Dorsolateral prefrontal cortex (tissue), 120 donors: ENCODE measurements at regions of chr9 and their contacts with region 1.

Region 1: GRCh38 chr9:116737152-116737546 is 50.0 kb downstream of the TRIM32 start:
- DNase-seq: peak; percentile 79 to 92 (median 88)
- H3K4me3 ChIP-seq: peak overlapping the region in 3 of 59 donors; percentile 18 to 38 (median 27)
- H3K27ac ChIP-seq: peak overlapping the region in 1 of 59 donors; percentile 6
- H3K27me3 ChIP-seq: no peaks in the 10 kb centered on the region
- CTCF ChIP-seq: peak; percentile 66 to 95 (median 88)

Region 2: DNA sequence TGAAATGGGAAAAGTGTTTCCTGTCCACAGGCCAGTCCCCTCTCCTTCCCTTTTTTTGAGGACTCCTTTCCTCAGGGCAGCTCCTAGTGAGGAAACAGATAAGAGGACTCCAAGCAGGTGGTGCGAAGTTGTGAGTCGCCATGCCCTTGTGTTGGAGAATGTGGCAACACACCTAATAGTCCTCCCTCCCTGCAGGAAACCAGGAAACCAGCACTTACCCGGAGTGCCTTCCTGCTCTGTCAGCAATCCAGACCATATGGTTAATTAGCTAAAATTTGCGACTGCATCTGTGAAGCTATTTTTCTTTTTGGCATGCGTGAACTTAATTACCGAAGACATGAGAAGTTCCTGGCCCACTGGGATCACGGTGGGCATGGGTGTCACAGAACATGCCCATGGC is 19.9 kb after region 1 on chr9:
- intact Hi-C with region 1: no loop called
- DNase-seq: peak in 1 of 10 donors; percentile 79
- H3K4me3 ChIP-seq: no peak overlapping the region
- H3K27ac ChIP-seq: peak overlapping the region in 1 of 59 donors; percentile 43
- H3K27me3 ChIP-seq: no peaks in the 10 kb centered on the region
- CTCF ChIP-seq: no peak

Region 3: DNA sequence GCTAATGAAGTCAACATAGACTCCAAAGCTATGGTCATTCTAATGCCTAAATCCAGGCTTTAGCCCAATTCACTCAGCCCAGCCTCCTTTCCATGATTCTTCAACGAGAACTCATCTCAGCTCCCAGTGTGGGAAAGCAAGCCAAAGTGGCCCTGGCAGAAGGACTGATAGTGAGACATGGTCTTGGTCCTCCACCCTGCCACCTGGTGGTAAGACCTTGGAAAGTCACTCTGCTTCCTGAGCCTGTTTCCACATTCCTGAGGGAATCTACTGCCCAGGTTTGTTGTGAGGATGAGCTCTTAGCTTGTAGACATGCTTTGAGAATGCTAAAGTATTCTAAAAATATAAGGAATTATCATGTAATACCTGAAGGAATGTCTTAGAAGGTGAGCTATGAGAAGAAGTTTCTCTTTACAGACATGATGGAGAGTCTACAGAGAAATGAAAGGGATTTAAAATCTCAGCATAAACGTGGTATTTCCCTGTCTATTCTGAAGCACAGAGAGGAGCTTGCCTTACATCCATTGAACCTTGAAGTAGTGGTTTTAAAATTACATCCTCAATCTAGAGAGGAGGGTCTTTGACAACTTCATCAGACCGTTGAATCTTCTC is 123.5 kb after region 1 on chr9:
- intact Hi-C with region 1: loop called (anchors 2 to 5 kb)
- DNase-seq: peak; percentile 50 to 82 (median 64)
- H3K4me3 ChIP-seq: no peak overlapping the region
- H3K27ac ChIP-seq: no peak overlapping the region
- H3K27me3 ChIP-seq: no peaks in the 10 kb centered on the region
- CTCF ChIP-seq: peak; percentile 53 to 88 (median 79)

Region 4: GRCh38 chr9:117178596-117179375 is 441.6 kb after region 1 on chr9:
- intact Hi-C with region 1: loop called in 1 of 2 experiments (anchors 10 kb)
- DNase-seq: peak in 6 of 10 donors; percentile 14 to 58 (median 42)
- H3K4me3 ChIP-seq: no peak overlapping the region
- H3K27ac ChIP-seq: peak overlapping the region in 2 of 59 donors; percentile 3 to 13
- H3K27me3 ChIP-seq: no peaks in the 10 kb centered on the region
- CTCF ChIP-seq: no peak

Region 5: GRCh38 chr9:117258184-117258866 is 521.2 kb after region 1 on chr9:
- intact Hi-C with region 1: loop called in 1 of 2 experiments (anchors 10 kb)
- DNase-seq: no peak
- H3K4me3 ChIP-seq: no peak overlapping the region
- H3K27ac ChIP-seq: no peak overlapping the region
- H3K27me3 ChIP-seq: no peaks in the 10 kb centered on the region
- CTCF ChIP-seq: no peak